ENCODE measurements at regions of chr3 and their contacts with region 1.

Region 1: GRCh38 chr3:11006986-11007933 is 14.7 kb downstream of the SLC6A1 start:
- DNase-seq: peak in 1 of 2 experiments; percentile 61
- H3K4me3 ChIP-seq: no peak overlapping the region
- H3K27ac ChIP-seq: no peak overlapping the region
- H3K4me1 ChIP-seq: peaks cover 0 to 4% (median 0%) of the 10 kb centered on the region in 4 experiments; a peak in 3 of 7 replicates
- H3K27me3 ChIP-seq: no peaks in the 10 kb centered on the region
- CTCF ChIP-seq: peak; percentile 48 to 70 (median 56)
- EP300 ChIP-seq: no peak
- POLR2A ChIP-seq: no peak
- RAD21 ChIP-seq: peak; percentile 36 to 45; a peak in 3 of 4 replicates

Region 2: DNA sequence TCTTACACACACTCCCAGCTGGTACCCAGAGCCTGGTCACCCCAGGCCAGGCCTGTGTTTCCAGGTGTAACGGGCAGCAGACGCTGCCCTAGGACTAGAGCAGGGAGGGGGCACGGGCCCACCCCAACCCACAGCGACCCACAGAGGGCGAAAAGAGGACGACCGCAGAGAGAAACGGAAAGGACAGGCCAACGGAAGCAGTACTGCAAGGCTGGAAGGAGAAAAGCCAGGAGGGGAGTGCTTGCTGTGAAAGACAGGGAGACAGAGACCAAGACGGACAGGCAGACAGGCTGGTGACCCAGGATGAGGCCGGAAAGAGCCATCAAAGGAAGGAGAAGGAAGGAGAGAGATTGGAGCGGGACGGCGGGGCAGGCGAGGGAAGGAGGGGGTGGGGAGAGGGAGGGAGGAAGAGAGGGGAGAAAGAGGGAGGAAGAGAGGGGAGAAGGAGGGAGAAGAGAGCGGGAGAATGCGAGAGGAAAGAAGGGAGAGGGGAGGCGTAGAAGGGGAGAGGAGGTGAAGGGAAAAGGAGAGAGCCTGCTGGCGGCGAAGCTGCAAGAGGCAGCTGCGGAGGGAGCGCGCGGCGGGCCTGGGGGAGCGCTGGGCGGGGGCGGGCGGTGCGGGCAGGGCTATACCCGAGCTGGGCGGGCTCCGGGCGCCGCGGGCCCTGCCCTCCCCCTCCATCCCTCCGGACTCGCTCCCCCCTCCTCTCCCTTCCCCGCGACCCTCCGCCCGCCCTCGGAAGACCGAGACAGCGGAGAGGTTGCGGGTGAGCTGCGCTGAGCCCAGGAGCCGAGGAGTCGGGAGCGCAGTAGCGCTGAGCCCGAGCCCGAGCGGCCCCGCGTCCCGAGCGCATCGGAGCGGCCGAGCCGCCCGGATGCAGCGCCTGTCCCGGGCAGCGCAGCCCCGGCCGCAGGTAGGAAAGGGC is 15.0 kb before region 1 on chr3 and contains the start of gene SLC6A1:
- CTCF ChIA-PET with region 1: interaction called, 100 read pairs
- POLR2A ChIA-PET with region 1: interaction called, 3 read pairs
- DNase-seq: peak in 1 of 2 experiments; percentile 83
- H3K4me3 ChIP-seq: peak within 1 kb of the TSS; percentile 66 to 86 (median 75)
- H3K27ac ChIP-seq: no peak within 1 kb of the TSS
- H3K4me1 ChIP-seq: peaks cover 0 to 11% (median 5%) of the 10 kb centered on the region in 4 experiments; a peak in 5 of 7 replicates
- H3K27me3 ChIP-seq: peaks cover 20 to 41% (median 39%) of the 10 kb centered on the region in 4 experiments
- CTCF ChIP-seq: peak; percentile 62 to 71 (median 71)
- EP300 ChIP-seq: no peak
- POLR2A ChIP-seq: no peak
- RAD21 ChIP-seq: peak; percentile 50 to 63; a peak in 3 of 4 replicates
- total RNA-seq, gene SLC6A1: 0.30 and 0.31 TPM in 2 replicates

Region 3: DNA sequence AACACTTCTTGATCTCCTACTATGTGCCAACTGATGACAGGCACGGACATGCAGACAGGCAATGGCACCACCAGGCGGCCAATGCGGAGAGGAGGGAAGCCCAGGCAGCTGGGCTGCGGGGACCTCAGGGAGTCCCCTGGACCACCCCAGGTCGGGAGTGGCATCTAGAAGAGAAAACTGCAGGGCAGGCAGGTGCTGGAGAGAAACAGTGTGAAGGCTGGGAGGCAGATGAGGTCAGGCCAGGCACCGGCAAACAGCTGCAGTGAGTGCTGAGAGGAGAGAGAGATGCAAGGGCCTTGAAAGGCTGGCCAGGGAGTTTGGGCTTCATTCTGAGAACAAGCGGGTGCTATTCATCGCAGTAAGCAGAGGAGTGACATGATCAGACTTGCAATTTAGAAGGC is 14.4 kb after region 1 on chr3:
- CTCF ChIA-PET with region 1: interaction called, 20 read pairs
- POLR2A ChIA-PET with region 1: interaction called, 3 read pairs
- DNase-seq: peak in 1 of 2 experiments; percentile 54
- H3K4me3 ChIP-seq: no peak overlapping the region
- H3K27ac ChIP-seq: no peak overlapping the region
- H3K4me1 ChIP-seq: no peaks in the 10 kb centered on the region
- H3K27me3 ChIP-seq: peaks cover 0 to 6% (median under 1%) of the 10 kb centered on the region in 4 experiments; a peak in 2 of 7 replicates
- CTCF ChIP-seq: peak; percentile 32 to 63 (median 52)
- EP300 ChIP-seq: no peak
- POLR2A ChIP-seq: no peak
- RAD21 ChIP-seq: peak; percentile 55 to 61